AG04449 (cell line): ENCODE measurements at regions of chr17 and their contacts with region 1.

Region 1: DNA sequence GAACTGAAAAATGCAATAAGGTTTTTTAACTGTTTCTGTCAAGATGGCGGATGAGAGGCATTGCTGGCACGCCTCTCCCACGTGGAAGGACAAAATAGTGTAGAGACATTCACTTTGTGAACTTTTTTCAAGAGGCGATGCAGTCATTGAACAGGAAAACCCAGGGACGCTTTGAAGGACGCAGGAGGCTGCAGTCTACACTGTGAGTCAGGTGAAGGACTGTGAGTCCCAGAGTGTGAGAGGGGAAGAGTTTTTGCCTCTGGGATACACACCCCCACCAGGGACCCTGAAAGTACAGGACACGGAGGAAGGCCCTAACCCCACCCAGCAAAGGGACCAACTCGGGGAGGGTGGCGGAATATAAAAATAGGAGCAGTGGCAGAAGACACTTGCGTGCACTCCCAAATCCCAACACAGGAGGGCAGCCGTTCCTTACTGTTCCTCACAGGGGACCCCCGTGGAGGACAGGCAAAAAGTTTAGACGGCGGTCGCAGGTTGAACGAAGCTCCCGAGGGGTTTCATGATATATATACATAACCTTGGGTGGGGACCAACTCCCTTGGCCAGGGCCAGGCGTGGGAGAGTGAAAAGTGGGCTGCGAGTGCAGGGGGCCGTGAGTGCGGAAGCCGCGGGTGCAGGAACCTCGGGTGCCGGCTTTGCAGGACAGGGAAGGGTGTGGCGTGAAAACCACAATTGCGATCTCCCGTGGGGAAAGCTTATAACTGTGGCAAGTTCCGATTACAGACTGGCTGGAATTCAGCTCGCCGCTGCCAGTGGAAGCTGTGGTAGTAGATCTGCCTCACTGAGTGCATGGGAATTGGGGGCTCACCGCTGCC is 82.0 kb upstream of the ALOX12 start:
- DNase-seq: no peak
- H3K4me3 ChIP-seq: no peak overlapping the region
- CTCF ChIP-seq: peak; percentile 82

Region 2: GRCh38 chr17:6666077-6666521 is 247.7 kb before region 1 on chr17:
- CTCF ChIA-PET with region 1: interaction called, 38 read pairs
- POLR2A ChIA-PET with region 1: no interaction called
- DNase-seq: no peak
- H3K4me3 ChIP-seq: no peak overlapping the region
- CTCF ChIP-seq: peak; percentile 92

Region 3: DNA sequence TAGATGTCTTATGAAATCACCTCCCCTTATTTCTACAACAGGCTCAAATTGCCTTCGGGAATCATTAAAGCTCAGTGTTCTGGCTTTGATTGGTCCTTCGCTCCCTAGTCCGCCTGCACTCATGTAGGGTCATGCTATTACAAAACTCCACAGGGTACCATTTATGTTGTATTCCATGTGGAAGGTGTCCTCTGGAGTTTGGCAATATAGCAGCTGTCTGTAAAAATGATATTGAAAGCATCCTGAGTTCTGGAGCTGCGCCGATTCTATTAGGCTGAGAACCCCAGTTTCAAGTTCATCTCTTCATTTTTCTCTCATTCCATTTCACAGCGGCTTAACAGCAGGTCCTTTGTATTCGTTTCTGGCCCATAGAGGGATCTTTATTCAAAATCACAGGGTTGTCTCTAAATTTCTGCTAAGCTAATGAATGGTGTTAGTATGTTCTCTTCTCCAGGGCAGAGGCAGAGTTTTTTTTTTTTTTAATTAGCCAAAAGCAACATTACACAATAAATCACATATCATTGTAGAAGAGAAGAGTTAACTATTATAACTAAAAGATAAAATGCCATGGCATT is 10.4 kb before region 1 on chr17:
- CTCF ChIA-PET with region 1: interaction called, 11 read pairs
- POLR2A ChIA-PET with region 1: no interaction called
- DNase-seq: no peak
- H3K4me3 ChIP-seq: no peak overlapping the region
- CTCF ChIP-seq: no peak

Region 4: GRCh38 chr17:6936370-6937028 is 22.7 kb after region 1 on chr17:
- CTCF ChIA-PET with region 1: interaction called, 10 read pairs
- POLR2A ChIA-PET with region 1: no interaction called
- DNase-seq: no peak
- H3K4me3 ChIP-seq: peak overlapping the region; percentile 41
- CTCF ChIP-seq: no peak

Region 5: DNA sequence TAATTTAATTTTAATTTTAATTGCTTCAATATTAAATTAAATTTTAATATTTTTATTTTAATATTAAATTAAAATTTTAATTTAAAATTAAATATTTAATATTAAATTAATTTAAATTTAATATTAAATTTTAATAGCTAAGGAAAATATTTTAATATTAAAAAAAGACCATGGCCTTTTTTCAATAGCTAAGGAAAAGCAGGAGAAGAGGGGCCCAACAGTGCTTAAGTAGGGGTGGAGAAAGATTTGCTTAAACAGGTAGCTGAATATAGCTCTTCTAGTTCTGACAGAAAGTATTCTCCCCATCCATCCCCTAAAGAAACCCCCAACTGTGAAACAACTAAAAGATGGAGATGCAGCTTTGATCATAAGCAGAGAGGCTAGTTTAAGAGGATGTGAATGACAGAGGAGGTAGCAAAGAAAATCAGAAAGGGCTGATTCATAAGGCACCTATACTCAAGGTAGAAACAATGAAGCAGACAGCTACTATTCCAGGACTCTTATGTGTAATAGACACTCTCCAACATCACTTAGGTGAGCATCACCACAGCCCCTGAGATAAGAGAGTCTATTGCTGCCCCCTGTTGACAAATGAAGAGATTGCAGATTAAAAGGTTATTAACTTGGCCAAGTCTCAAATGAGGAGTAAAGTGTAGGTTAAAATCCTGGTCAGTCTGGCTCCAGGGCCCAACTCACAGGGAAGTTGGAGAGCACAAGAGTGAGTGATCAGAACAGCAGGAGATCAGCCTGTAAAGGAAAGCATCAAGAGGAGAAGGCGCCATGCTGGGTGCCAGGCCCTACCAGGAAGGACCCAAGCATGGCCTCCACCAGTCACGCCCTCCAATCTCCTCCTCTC is 90.8 kb after region 1 on chr17:
- CTCF ChIA-PET with region 1: interaction called, 301 read pairs
- POLR2A ChIA-PET with region 1: interaction called, 3 read pairs
- DNase-seq: no peak
- H3K4me3 ChIP-seq: no peak overlapping the region
- CTCF ChIP-seq: peak; percentile 48

Region 6: DNA sequence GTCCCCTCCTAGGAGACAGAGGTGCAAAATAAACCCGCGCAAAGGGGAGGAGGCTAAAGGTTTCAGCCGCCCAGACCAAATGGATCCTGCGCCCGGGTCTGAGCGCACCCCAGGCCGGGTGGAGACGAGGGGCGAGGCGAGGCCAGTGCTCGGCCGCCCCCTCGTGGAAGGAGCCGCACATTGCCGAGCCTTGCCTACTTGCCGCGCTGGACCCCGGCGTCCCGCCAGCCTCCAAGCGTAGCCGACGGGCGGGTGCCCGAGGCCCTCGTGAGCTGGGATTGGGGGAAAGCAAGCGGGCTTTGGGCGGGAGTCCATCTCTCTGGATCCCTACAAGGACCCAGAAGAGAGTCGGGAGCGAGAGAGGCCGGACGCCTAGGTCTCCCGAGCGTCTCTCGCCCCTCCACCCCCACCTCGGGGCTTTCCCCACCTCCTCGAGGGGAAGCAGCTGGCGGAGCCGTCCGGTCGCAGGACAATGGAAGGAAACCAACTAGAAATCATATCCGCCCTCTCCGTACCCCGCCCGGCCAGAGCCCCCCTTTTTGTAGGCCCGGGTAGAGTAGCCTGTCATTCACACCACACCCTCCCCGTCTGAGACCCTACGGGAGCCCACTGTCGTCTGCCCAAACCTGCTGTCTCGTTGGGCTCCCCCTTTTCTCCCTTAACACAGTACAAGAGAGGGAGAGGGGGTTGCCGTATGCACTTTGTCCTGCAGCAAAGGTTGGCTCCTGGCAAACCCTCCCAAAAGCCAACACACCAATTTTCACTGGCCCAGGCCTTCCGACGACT is 108.4 kb after region 1 on chr17:
- CTCF ChIA-PET with region 1: interaction called, 145 read pairs
- POLR2A ChIA-PET with region 1: no interaction called
- DNase-seq: no peak
- H3K4me3 ChIP-seq: peak overlapping the region; percentile 44
- CTCF ChIP-seq: peak; percentile 98

Region 7: DNA sequence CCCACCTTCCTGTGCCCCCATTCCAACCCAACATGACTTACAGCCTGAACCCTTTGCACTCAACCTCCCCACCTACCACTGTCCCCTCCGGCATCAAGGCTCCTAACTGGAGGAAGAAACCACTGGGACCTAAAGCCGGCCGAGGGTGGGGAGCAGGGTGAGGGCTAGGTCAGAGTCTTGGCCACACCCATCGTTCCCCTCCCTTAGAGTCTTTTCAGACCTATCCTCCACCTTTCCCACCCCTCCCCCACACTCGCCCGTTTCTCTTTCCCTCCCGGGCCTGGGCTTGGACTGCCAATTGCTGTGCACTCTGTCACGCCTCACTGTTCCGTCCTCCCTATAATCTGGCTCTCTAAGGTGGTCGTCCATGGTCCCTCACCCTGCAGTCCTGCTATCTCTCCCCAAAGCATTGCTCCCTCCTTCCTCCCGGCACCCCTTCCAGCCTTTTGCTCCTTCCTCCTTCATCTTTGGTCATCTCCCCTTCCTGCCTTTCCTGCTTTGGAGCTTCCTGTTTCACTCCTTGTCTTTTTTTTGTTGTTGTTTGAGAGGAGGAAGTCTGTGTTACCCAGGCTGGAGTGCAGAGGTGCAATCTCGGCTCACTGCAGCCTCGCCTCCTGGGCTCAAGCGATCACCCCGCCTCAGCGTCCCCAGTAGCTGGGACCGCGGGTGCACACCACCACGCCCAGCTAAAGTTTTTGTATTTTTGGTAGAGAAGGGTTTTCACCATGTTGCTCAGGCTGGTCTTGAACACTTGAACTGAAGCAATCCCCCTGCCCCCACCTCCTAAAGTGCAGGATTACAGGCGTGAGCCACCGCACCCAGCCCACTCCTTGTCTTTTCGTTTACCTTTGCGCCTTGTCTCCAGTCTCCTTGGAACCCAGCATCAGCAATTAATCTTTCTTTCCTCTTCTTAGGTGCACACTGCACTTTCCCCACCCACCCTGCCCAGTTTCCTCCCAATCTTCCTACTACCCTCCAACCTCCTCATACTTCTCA is 349.6 kb after region 1 on chr17:
- CTCF ChIA-PET with region 1: no interaction called
- POLR2A ChIA-PET with region 1: no interaction called
- DNase-seq: no peak
- H3K4me3 ChIP-seq: no peak overlapping the region
- CTCF ChIP-seq: no peak